ENCODE measurements at regions of chr1 and their contacts with region 1.

Region 1: DNA sequence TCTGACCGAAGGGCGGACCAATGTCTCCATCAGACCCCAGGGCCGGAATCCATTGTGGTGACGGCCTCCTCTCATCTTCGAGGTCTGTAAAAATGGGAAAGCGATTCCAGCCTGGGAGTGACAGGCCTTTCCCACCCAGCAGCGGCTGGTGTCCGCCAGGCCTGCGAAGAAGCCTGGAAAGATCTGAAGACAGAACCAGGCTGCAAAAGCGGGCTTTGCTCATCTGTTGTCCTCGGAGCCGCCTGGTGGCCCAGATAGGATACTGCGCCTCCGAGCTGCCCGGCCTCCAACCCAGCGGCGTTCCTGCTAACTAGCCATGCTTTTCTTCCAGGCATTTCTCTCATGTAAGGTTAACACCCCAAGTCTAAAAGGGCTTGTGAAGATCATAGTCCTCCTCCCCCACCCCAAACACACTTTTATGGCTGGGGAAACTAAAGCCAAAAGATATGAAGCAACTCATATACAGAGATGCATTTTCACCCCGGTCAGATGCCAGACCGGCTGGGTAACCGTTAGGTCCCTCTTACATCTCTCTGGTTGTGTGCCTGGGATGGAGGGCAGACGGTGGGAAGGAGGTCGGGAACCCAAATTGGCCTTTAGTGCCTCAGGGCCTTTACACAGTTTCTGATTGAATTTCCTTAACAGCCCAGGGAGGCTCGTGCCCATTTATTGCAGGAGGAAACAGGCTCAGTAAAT is 1.9 kb upstream of the DHRS3 start:
- DNase-seq: peak; percentile 77
- H3K4me3 ChIP-seq: peak overlapping the region; percentile 83
- H3K27ac ChIP-seq: no peak overlapping the region
- H3K27me3 ChIP-seq: peaks cover 9% of the 10 kb centered on the region
- CTCF ChIP-seq: peak; percentile 94

Region 2: GRCh38 chr1:12314333-12314903 is 305.5 kb before region 1 on chr1:
- CTCF ChIA-PET with region 1: interaction called, 48 read pairs
- POLR2A ChIA-PET with region 1: no interaction called
- DNase-seq: no peak
- H3K4me3 ChIP-seq: no peak overlapping the region
- H3K27ac ChIP-seq: no peak overlapping the region
- H3K27me3 ChIP-seq: no peaks in the 10 kb centered on the region
- CTCF ChIP-seq: peak; percentile 37

Region 3: DNA sequence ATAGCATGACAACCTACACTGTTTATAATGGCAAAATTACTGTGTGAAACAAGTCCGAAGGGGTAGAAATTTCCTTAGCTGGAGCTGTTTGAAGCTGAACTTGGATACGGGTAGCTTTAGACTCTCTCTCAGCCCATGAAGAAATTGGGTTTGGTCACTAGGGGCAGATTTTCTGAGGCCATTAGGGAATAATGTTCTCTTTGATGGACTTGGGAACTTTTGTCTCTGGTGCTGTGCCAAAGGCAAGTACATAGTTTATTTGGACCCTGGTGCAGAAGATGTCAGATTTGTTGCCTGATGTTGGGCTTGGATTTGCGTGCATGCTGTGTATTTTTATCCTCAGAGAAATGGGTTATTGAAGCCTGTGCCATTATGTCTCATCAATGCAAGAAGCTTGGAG is 280.5 kb before region 1 on chr1:
- CTCF ChIA-PET with region 1: interaction called, 3 read pairs
- POLR2A ChIA-PET with region 1: interaction called, 13 read pairs
- DNase-seq: no peak
- H3K4me3 ChIP-seq: no peak overlapping the region
- H3K27ac ChIP-seq: no peak overlapping the region
- H3K27me3 ChIP-seq: no peaks in the 10 kb centered on the region
- CTCF ChIP-seq: peak; percentile 42

Region 4: DNA sequence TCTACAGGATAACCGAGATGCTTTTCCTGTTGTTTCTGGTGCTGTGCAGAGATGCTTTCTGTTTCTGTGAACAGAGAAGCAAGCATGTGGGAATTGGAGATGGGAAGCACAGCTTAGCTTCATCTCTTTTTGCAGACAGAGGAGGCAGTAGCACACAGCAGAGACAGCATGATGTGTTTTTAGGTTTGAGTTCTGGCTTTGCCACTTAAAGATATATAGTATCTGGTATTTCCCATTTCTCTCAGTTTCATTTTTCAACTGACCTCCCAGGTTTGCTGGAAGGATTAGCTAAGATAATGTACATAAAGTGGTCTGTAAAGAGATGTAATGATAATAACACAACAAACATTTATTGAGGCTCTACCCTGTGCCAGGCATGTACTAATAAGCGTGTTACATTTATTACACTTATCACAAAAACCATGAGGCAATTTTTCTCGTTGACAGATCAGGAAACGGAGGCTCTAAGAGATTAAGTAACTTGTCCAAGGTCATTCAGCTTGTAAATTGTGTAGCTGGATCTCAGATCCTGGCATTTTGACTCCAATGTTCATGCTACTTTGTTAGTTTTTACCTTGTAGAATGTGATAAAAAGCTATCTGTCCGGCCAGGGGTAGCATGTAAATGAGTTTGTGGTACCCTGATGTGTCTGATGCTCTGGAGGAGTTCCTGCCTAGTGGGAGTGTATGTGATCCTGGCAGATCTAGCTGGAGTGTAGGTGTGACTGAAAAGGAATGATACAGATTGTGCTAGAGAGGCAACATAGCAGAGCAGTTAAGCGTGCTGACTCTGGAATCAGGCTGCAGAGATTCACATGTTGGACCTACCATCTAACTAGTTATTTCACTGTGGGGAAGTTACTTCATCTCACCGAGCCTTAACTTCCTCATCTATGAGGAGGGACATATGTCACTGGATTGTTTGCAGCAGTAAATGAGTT is 243.6 kb before region 1 on chr1:
- CTCF ChIA-PET with region 1: interaction called, 3 read pairs
- POLR2A ChIA-PET with region 1: interaction called, 11 read pairs
- DNase-seq: no peak
- H3K4me3 ChIP-seq: no peak overlapping the region
- H3K27ac ChIP-seq: no peak overlapping the region
- H3K27me3 ChIP-seq: no peaks in the 10 kb centered on the region
- CTCF ChIP-seq: no peak

Region 5: GRCh38 chr1:12407050-12407961 is 212.6 kb before region 1 on chr1:
- CTCF ChIA-PET with region 1: interaction called, 27 read pairs
- POLR2A ChIA-PET with region 1: no interaction called
- DNase-seq: peak; percentile 55
- H3K4me3 ChIP-seq: no peak overlapping the region
- H3K27ac ChIP-seq: peak overlapping the region; percentile 25
- H3K27me3 ChIP-seq: no peaks in the 10 kb centered on the region
- CTCF ChIP-seq: peak; percentile 56

Region 6: GRCh38 chr1:12596007-12596821 is 23.7 kb before region 1 on chr1:
- CTCF ChIA-PET with region 1: interaction called, 8 read pairs
- POLR2A ChIA-PET with region 1: interaction called, 34 read pairs
- DNase-seq: peak; percentile 91
- H3K4me3 ChIP-seq: peak overlapping the region; percentile 39
- H3K27ac ChIP-seq: peak overlapping the region; percentile 99
- H3K27me3 ChIP-seq: no peaks in the 10 kb centered on the region
- CTCF ChIP-seq: no peak

Measured in AG04450 (cell line).